WTC11 (cell line): ENCODE measurements at regions of chr12 and their contacts with region 1.

Region 1: GRCh38 chr12:48903982-48904411 is 21.3 kb downstream of the FKBP11 start:
- DNase-seq: peak; percentile 92
- ATAC-seq: peak; percentile 100
- H3K4me3 Mint-ChIP-seq: peak overlapping the region; percentile 65
- H3K27ac Mint-ChIP-seq: no peak overlapping the region
- H3K4me1 Mint-ChIP-seq: 0 out of 2 replicates have a peak, but pooled peaks cover 3% of the 10 kb centered on the region
- H3K27me3 Mint-ChIP-seq: peaks cover 14% of the 10 kb centered on the region
- CTCF ChIP-seq: peak; percentile 45; the same call in 1 of the 2 replicates

Region 2: GRCh38 chr12:48803675-48804074 is 100.3 kb before region 1 on chr12:
- CTCF ChIA-PET with region 1: no interaction called
- POLR2A ChIA-PET with region 1: no interaction called
- DNase-seq: no peak
- ATAC-seq: no peak
- H3K4me3 Mint-ChIP-seq: no peak overlapping the region
- H3K27ac Mint-ChIP-seq: no peak overlapping the region
- H3K4me1 Mint-ChIP-seq: no peaks in the 10 kb centered on the region
- H3K27me3 Mint-ChIP-seq: no peaks in the 10 kb centered on the region; the same call in 1 of the 2 replicates
- CTCF ChIP-seq: no peak

Region 3: GRCh38 chr12:48865434-48866290 is 38.3 kb before region 1 on chr12 and contains the start of gene RND1:
- CTCF ChIA-PET with region 1: interaction called, 22 read pairs
- POLR2A ChIA-PET with region 1: no interaction called
- DNase-seq: peak; percentile 92
- ATAC-seq: peak; percentile 96
- H3K4me3 Mint-ChIP-seq: peak within 1 kb of the TSS; percentile 91
- H3K27ac Mint-ChIP-seq: peak within 1 kb of the TSS; percentile 94
- H3K4me1 Mint-ChIP-seq: peaks cover 44% of the 10 kb centered on the region
- H3K27me3 Mint-ChIP-seq: peaks cover 6% of the 10 kb centered on the region; the same call in 1 of the 2 replicates
- CTCF ChIP-seq: no peak
- total RNA-seq, gene RND1: 7.6 to 9.1 TPM (median 8.5 TPM) in 3 replicates

Region 4: DNA sequence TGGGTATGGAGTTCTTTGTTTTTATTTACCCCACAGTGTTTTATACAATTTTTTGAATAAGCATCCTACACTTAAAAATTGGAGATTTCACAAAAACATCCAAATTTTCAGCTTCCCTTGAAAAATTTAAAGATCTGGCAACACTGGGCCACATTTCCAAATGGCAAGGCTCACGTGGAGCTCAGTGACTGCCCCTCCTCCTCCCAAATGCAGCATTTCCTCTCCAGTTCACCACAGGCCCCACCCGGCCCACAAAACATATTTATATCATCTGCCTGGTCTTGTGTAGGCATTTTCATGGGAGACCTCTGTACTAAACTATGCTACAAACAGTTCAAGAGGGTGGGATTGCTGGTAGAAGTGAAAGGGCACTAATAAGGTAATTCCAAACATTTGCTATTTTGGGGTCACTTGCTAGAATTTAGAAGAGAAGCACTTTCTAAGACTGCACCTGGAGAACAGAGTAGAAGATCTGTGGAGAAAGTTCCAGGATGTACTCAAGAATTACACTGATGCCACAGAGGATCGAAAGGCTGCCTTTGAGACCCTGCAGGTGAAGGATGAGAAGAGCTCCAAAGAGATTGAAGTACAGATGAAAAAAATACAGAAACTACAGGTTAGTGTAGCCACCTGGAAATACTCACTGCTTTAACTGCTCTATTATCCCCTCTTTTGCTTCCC is 14.0 kb after region 1 on chr12:
- CTCF ChIA-PET with region 1: interaction called, 43 read pairs
- POLR2A ChIA-PET with region 1: no interaction called
- DNase-seq: no peak
- ATAC-seq: no peak
- H3K4me3 Mint-ChIP-seq: no peak overlapping the region
- H3K27ac Mint-ChIP-seq: peak overlapping the region; percentile 71
- H3K4me1 Mint-ChIP-seq: no peaks in the 10 kb centered on the region
- H3K27me3 Mint-ChIP-seq: no peaks in the 10 kb centered on the region
- CTCF ChIP-seq: no peak

Region 5: GRCh38 chr12:48936379-48936979 is 32.5 kb after region 1 on chr12:
- CTCF ChIA-PET with region 1: interaction called, 21 read pairs
- POLR2A ChIA-PET with region 1: no interaction called
- DNase-seq: peak; percentile 89
- ATAC-seq: peak; percentile 88
- H3K4me3 Mint-ChIP-seq: no peak overlapping the region
- H3K27ac Mint-ChIP-seq: peak overlapping the region; percentile 46
- H3K4me1 Mint-ChIP-seq: no peaks in the 10 kb centered on the region
- H3K27me3 Mint-ChIP-seq: no peaks in the 10 kb centered on the region
- CTCF ChIP-seq: peak; percentile 70

Region 6: DNA sequence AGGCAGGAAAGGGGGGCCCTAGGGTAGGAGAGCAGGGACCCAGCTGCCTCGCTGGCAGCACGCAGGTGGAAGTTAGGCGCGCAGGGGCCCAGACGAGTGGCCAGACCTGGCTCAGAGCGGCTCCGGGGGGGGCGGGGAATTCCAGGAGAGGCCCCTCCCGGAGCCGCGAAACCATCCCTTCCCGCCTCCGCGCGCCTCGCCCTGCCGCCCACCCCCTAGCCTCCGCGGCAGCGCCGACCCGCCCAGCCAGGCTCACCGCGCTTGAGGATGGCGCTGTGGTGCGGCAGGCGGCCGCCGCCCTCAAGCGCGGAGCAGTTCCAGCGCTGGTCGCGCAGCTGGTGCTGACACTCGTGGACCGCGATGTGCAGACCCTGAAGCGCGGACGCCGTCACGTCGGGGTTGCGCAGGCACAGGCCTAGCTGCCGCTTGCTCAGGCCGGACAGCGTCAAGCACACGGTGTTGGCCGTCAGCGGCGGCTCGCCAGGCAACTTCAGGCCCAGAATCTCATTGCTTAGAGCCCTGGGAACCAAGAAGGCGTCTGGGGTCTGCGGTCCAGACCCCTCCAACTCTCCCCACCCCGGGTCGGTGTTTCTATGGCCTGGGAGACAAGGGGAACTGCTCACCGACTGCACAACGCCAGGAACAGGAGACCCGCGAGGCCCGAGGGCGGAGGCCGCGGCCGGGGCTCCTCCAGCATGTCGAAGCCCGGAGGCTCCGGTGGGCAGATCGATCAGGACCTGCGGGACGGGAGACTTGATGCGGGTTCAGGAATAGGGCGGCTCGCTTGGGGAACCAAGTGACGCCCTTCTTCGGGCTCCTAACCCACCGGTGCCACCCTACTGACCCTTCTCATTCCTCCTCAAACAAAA is 66.1 kb after region 1 on chr12:
- CTCF ChIA-PET with region 1: interaction called, 11 read pairs
- POLR2A ChIA-PET with region 1: no interaction called
- DNase-seq: peak; percentile 48
- ATAC-seq: peak; percentile 3; the same call in 1 of the 2 replicates
- H3K4me3 Mint-ChIP-seq: peak overlapping the region; percentile 86
- H3K27ac Mint-ChIP-seq: no peak overlapping the region
- H3K4me1 Mint-ChIP-seq: peaks cover 54% of the 10 kb centered on the region
- H3K27me3 Mint-ChIP-seq: peaks cover 89% of the 10 kb centered on the region
- CTCF ChIP-seq: no peak

Region 7: DNA sequence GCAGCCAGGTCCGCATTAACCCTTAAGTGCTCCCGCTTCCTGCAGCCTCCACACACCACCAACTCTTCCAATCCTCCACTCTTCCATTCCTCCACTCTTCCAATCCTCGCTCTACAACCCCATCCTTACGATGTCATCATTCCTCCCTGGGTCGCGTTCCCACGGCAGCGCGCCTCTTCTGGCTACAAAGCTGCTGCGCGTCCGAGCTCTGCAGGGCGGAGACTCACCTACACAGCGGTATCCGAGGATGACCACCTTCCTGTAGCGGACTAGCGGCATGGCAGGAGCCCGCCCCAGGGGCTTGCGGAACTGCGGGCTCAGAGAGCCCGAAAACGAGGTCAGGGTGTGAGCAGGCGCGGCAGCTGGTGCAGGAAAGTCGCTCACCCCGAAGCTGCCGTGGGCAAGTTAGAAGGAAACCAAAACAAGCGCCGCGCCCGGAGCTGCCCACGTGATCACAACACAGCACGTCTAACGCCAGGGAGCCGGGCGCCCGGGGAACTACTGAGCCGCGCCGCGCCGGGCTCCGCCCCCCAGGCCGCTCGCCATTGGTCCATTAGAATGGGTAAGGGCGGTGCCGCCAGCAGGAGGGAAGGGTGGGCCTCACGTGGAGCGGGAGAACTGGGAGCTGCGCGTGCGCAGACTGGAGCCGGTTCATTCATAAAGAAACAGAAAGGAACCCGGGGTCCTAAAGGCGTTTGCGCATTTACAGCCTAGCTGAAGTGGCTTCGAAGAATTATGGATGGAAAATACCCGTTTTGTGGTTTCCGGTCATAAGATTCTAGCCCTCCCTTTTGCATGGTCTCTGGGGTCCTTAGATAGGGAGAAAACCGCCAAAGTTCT is 165.7 kb after region 1 on chr12 and contains the start of gene RHEBL1:
- CTCF ChIA-PET with region 1: no interaction called
- POLR2A ChIA-PET with region 1: no interaction called
- DNase-seq: peak; percentile 95
- ATAC-seq: peak; percentile 96
- H3K4me3 Mint-ChIP-seq: peak within 1 kb of the TSS; percentile 99
- H3K27ac Mint-ChIP-seq: peak within 1 kb of the TSS; percentile 7; the same call in 1 of the 2 replicates
- H3K4me1 Mint-ChIP-seq: peaks cover 15% of the 10 kb centered on the region
- H3K27me3 Mint-ChIP-seq: peaks cover 20% of the 10 kb centered on the region
- CTCF ChIP-seq: no peak
- total RNA-seq, gene RHEBL1: 6.4 to 9.0 TPM (median 6.9 TPM) in 3 replicates